SK-MEL-5 (cell line): ENCODE measurements at regions of chr5 and their contacts with region 1.

Region 1: DNA sequence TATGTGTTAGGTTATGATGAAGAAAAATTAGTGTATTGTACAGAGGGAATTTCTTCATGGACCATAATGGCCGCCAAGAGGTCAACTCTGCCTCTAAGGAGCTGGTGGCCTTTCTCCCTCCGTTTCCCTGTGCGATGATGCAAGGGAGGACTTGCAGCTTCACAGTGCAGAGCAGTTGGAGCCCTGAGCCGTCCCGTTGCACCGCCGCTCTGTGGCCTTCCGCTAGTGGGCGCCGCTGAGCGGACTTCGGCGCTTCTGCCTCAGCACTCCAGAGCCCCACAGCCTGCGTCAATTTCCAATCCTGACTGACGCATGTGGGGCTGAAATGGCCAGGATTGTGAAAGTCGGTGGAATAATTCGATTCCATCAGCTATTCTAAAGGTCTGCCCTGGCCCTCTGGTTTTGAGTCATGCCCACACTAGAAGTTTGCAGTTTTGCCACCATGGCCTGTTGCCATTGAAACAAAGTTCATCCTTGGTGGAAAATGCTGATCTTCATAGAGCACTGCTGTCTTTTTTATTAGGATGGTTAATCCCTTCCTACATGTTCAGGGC is 22.7 kb upstream of the LECT2 start:
- DNase-seq: peak; percentile 93

Region 2: DNA sequence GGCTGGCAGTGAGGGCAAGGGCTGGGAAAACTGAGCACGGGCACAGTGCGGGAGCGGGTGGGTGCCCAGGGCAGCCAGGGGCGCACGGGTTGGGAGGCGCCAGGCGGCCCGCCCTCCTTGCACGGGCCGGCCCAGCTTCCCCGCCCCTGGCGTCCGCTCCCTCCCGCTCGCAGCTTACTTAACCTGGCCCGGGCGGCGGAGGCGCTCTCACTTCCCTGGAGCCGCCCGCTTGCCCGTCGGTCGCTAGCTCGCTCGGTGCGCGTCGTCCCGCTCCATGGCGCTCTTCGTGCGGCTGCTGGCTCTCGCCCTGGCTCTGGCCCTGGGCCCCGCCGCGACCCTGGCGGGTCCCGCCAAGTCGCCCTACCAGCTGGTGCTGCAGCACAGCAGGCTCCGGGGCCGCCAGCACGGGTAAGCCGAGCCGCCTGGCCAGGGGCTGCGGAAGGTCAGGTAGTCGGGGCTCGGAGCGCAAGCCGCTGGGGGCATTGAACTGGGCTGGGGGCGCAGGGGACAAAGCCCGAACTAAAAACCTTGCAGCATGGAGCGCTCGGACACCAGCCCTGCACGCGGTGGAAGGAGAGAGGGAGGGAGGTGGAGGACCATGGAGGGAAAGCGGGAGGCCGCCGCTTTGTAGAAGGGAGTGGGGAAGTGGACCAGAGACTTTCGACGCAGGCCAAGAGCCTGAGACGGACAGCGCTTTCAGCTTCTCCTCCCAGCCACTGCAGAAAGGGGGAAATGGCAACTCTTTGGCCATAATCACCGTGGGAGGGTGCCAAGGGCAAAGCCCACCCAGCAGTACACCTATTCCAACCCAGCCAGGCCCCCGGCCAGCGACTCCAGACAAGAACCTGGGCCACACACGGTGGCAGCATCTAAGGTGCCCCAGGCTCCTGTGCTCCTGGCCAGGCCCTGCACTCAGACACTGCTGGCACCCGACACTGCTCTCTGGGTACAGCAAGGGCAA is 51.6 kb after region 1 on chr5 and contains the start of gene TGFBI:
- in situ Hi-C with region 1: loop called (anchors 10 kb)
- DNase-seq: no peak
- total RNA-seq, gene TGFBI: 304 and 330 TPM in 2 replicates

Region 3: GRCh38 chr5:136232316-136232715 is 254.9 kb after region 1 on chr5:
- in situ Hi-C with region 1: no loop called
- DNase-seq: no peak

Region 4: GRCh38 chr5:136382071-136382470 is 404.6 kb after region 1 on chr5:
- in situ Hi-C with region 1: no loop called
- DNase-seq: no peak